Naive thymus-derived CD4-positive, alpha-beta T cell (primary cell): ENCODE measurements at regions of chr14 and their contacts with region 1.

Region 1: DNA sequence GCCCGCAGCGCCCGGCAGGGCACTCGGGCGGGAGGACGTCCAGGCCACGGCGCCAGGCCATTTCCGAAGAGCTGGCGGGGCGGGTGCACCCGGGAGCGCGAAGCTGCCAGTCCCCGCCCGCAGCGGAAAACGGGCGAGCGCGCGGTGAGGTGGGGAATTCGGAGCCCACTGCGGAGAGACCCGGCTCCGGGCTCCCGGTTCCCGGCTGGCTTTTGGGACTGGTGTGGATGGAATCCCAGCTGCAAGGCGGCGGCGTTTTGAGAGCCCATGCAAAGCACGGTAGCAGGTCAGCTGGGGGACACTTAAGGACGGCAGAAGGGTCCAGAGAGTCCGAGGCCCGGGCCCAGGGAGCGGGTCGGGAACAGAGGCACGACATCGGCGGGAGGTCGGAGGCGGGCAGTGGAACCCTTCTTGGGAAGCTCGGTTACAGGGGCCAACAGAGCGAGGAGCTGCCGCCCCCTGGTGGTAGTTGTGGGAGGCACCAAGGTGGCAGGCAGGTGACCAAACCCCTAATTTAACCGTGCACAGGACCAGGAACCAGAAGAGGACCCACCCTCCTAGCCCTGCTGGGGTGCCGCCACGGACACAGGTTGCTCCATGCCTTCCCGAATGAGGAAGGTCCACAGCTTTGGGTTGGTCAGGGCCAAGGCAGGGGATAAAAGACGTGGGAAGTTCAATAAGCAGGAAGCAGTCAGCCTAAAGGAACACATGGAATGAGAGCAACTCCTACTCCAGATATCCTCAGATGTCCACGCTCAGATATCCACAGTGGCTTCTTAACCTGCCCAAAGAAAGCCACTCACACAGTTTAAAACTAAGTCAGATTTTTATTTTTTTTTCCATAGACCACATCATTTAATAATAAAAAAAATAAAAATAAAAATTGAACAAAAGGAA is 685 bp upstream of the CDH24 start:
- DNase-seq: peak; percentile 71 to 89 (median 83)
- ATAC-seq: peak; percentile 81
- H3K4me3 ChIP-seq: peak overlapping the region; percentile 67
- H3K4me3 Mint-ChIP-seq: peak overlapping the region; percentile 78 to 91 (median 87)
- H3K27ac ChIP-seq: peak overlapping the region; percentile 49
- H3K27ac Mint-ChIP-seq: peak overlapping the region in 7 of 9 donors; percentile 23 to 85 (median 58)
- H3K4me1 ChIP-seq: peaks cover 7 to 9% of the 10 kb centered on the region in 2 donors
- H3K4me1 Mint-ChIP-seq: peaks cover 13 to 20% (median 17%) of the 10 kb centered on the region in 7 donors
- H3K27me3 ChIP-seq: no peaks in the 10 kb centered on the region
- H3K27me3 Mint-ChIP-seq: peaks cover 0 to 8% (median 0%) of the 10 kb centered on the region in 5 donors

Region 2: GRCh38 chr14:22829661-22830442 is 228.2 kb before region 1 on chr14 and contains the start of gene MRPL52:
- CTCF ChIA-PET with region 1: no interaction called
- POLR2A ChIA-PET with region 1: no interaction called
- intact Hi-C with region 1: loop called in 1 of 2 experiments (anchors 10 kb)
- DNase-seq: peak; percentile 71 to 90 (median 88)
- ATAC-seq: peak; percentile 97
- H3K4me3 ChIP-seq: peak within 1 kb of the TSS; percentile 99
- H3K4me3 Mint-ChIP-seq: peak within 1 kb of the TSS; percentile 74 to 94 (median 91)
- H3K27ac ChIP-seq: peak within 1 kb of the TSS; percentile 95
- H3K27ac Mint-ChIP-seq: peak within 1 kb of the TSS; percentile 91 to 99 (median 97)
- H3K4me1 ChIP-seq: peaks cover 11 to 21% of the 10 kb centered on the region in 2 donors
- H3K4me1 Mint-ChIP-seq: peaks cover 11 to 39% (median 32%) of the 10 kb centered on the region in 7 donors
- H3K27me3 ChIP-seq: no peaks in the 10 kb centered on the region
- H3K27me3 Mint-ChIP-seq: peaks cover 0 to 2% (median 0%) of the 10 kb centered on the region in 5 donors
- total RNA-seq, gene MRPL52: 32.9 to 118 (median 48.2) TPM

Region 3: GRCh38 chr14:22973217-22974032 is 84.6 kb before region 1 on chr14:
- CTCF ChIA-PET with region 1: interaction called, 53 read pairs
- POLR2A ChIA-PET with region 1: interaction called, 4 read pairs
- intact Hi-C with region 1: loop called in 1 of 2 experiments (anchors 1 kb)
- DNase-seq: peak in 6 of 9 donors; percentile 28 to 46 (median 40)
- ATAC-seq: peak; percentile 73
- H3K4me3 ChIP-seq: no peak overlapping the region
- H3K4me3 Mint-ChIP-seq: no peak overlapping the region
- H3K27ac ChIP-seq: no peak overlapping the region
- H3K27ac Mint-ChIP-seq: no peak overlapping the region
- H3K4me1 ChIP-seq: no peaks in the 10 kb centered on the region
- H3K4me1 Mint-ChIP-seq: peaks cover 0 to 1% (median 0%) of the 10 kb centered on the region in 7 donors
- H3K27me3 ChIP-seq: no peaks in the 10 kb centered on the region
- H3K27me3 Mint-ChIP-seq: peaks cover 0 to 19% (median 0%) of the 10 kb centered on the region in 5 donors

Region 4: DNA sequence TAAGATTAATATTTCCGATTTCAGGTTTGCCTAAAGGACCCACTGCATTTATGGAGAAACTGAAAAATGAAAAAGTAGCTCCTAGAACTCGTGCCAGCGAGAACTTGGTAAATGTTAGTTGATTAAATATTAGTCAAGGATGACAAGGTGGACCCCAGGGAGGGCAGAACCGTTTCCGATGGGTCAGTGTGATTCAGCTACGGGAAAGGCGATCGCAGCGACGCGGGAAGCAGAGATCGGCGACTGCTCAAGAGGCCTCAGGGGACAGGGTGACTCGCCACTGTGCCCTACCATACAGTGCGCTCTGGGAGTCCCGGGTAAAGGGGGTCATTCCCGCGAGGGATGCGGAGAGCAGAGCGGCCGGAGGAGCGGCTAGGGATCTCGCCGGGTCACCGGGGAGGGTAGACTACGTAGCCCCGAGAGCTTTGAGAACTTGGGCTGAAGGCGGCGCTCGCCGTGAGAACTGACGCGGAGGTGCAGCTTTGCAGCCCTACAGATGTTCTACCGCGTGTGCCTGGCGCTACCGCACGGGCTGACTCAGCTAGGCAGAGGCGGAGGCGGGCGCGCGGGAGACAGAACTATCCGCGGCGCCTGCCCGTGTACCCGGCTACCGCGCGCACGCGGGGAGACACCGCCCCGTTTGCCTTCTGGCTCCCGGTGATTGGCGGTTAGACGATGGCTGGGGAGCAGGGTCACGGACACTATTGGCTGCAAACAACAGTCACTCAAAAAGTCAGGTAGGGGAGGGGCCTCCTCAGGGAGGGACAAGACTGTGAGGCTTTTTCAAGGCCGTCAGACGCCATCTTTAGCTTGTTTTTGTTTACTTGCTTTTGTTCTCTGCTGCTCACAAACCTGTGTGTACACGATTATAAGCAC is 51.2 kb before region 1 on chr14:
- CTCF ChIA-PET with region 1: interaction called, 24 read pairs
- POLR2A ChIA-PET with region 1: interaction called, 10 read pairs
- intact Hi-C with region 1: loop called (anchors 1 kb)
- DNase-seq: peak; percentile 88 to 99 (median 98)
- ATAC-seq: peak; percentile 97
- H3K4me3 ChIP-seq: peak overlapping the region; percentile 94
- H3K4me3 Mint-ChIP-seq: peak overlapping the region; percentile 91 to 100 (median 96)
- H3K27ac ChIP-seq: peak overlapping the region; percentile 86
- H3K27ac Mint-ChIP-seq: peak overlapping the region; percentile 87 to 99 (median 98)
- H3K4me1 ChIP-seq: peaks cover 9 to 25% of the 10 kb centered on the region in 2 donors
- H3K4me1 Mint-ChIP-seq: peaks cover 12 to 60% (median 48%) of the 10 kb centered on the region in 7 donors
- H3K27me3 ChIP-seq: no peaks in the 10 kb centered on the region
- H3K27me3 Mint-ChIP-seq: no peaks in the 10 kb centered on the region

Region 5: GRCh38 chr14:23034483-23035302 is 23.3 kb before region 1 on chr14 and contains the start of gene PSMB5:
- CTCF ChIA-PET with region 1: interaction called, 7 read pairs
- POLR2A ChIA-PET with region 1: no interaction called
- intact Hi-C with region 1: loop called (anchors 1 kb)
- DNase-seq: peak; percentile 63 to 94 (median 91)
- ATAC-seq: peak; percentile 95
- H3K4me3 ChIP-seq: peak within 1 kb of the TSS; percentile 79
- H3K4me3 Mint-ChIP-seq: peak within 1 kb of the TSS; percentile 87 to 96 (median 92)
- H3K27ac ChIP-seq: peak within 1 kb of the TSS; percentile 83
- H3K27ac Mint-ChIP-seq: peak within 1 kb of the TSS; percentile 93 to 99 (median 96)
- H3K4me1 ChIP-seq: peaks cover 9 to 17% of the 10 kb centered on the region in 2 donors
- H3K4me1 Mint-ChIP-seq: peaks cover 22 to 43% (median 29%) of the 10 kb centered on the region in 7 donors
- H3K27me3 ChIP-seq: no peaks in the 10 kb centered on the region
- H3K27me3 Mint-ChIP-seq: no peaks in the 10 kb centered on the region
- total RNA-seq, gene PSMB5: 19.2 to 69.1 (median 32.8) TPM